ENCODE measurements at regions of chr3 and their contacts with region 1.

Region 1: DNA sequence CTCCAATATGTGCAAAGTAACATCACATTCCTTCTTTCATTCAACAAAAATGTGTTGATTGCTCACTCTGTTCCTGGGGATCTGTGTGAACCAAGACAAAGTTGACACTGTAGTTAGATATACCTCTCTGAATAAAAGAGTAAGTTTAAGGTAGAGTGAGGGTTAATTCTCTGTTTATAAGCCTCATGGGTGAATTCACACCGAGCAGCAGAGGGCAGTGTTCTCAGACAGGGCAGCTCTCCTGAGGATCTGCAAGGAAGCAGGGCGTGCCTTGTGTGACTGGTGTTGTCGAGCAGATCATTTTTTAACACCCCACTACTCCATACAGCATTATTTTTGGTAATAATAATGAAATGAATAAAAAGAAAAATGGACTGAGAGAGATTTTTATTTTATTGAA is 34.4 kb downstream of the PAQR9 start:
- DNase-seq: peak; percentile 21
- H3K4me3 ChIP-seq: no peak overlapping the region
- H3K27ac ChIP-seq: no peak overlapping the region
- H3K4me1 ChIP-seq: no peaks in the 10 kb centered on the region
- H3K27me3 ChIP-seq: peaks cover 7 to 16% of the 10 kb centered on the region in 2 experiments
- CTCF ChIP-seq: peak; percentile 37 to 47
- POLR2A ChIP-seq: no peak

Region 2: GRCh38 chr3:142987080-142987700 is 58.1 kb after region 1 on chr3:
- CTCF ChIA-PET with region 1: interaction called, 9 read pairs
- POLR2A ChIA-PET with region 1: no interaction called
- dilution Hi-C with region 1: no loop called
- intact Hi-C with region 1: loop called (anchors 1 kb)
- DNase-seq: peak; percentile 51
- H3K4me3 ChIP-seq: no peak overlapping the region
- H3K27ac ChIP-seq: no peak overlapping the region
- H3K4me1 ChIP-seq: no peaks in the 10 kb centered on the region
- H3K27me3 ChIP-seq: peaks cover 8 to 15% of the 10 kb centered on the region in 2 experiments
- CTCF ChIP-seq: peak; percentile 37
- POLR2A ChIP-seq: no peak

Region 3: DNA sequence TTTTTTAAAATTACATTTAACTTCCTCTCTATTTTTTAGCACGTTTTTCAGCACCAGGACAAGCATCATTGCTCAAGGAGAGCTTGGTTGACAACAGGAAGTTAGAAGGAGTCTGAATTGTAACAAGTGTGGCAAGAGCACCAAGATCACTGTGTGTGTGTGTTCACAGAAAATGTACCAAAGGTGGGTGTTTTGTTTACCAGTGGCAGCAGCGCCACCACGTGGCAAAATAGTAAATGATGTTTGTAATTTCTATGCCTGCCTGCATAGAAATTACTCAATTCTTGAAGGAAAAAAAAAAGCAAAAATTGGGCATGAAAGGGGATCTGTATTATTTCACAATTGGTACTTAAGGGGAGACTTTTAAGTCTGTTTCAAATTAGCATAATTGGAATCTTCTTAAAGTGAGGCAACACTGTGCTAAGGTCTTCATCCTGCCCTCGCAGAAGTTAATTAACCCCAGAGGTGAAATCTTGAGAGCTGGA is 64.9 kb after region 1 on chr3:
- CTCF ChIA-PET with region 1: interaction called, 8 read pairs
- POLR2A ChIA-PET with region 1: no interaction called
- dilution Hi-C with region 1: no loop called
- intact Hi-C with region 1: loop called (anchors 1 kb)
- DNase-seq: peak; percentile 61
- H3K4me3 ChIP-seq: no peak overlapping the region
- H3K27ac ChIP-seq: no peak overlapping the region
- H3K4me1 ChIP-seq: no peaks in the 10 kb centered on the region
- H3K27me3 ChIP-seq: peaks cover 6 to 12% of the 10 kb centered on the region in 2 experiments
- CTCF ChIP-seq: peak; percentile 54 to 56
- POLR2A ChIP-seq: no peak